Heart left ventricle (tissue), 16 donors: ENCODE measurements at regions of chr22 and their contacts with region 1.

Region 1: GRCh38 chr22:38262051-38262795 is 10.6 kb downstream of the TMEM184B start:
- DNase-seq: peak; percentile 48 to 75 (median 61)
- ATAC-seq: peak; percentile 22 to 67 (median 56)
- H3K4me3 ChIP-seq: no peak overlapping the region
- H3K27ac ChIP-seq: peak overlapping the region in 11 of 12 donors; percentile 18 to 91 (median 78)
- H3K4me1 ChIP-seq: peaks cover 24 to 95% (median 77%) of the 10 kb centered on the region in 12 donors
- H3K27me3 ChIP-seq: no peaks in the 10 kb centered on the region
- CTCF ChIP-seq: peak; percentile 50 to 77 (median 58)
- POLR2A ChIP-seq: no peak

Region 2: DNA sequence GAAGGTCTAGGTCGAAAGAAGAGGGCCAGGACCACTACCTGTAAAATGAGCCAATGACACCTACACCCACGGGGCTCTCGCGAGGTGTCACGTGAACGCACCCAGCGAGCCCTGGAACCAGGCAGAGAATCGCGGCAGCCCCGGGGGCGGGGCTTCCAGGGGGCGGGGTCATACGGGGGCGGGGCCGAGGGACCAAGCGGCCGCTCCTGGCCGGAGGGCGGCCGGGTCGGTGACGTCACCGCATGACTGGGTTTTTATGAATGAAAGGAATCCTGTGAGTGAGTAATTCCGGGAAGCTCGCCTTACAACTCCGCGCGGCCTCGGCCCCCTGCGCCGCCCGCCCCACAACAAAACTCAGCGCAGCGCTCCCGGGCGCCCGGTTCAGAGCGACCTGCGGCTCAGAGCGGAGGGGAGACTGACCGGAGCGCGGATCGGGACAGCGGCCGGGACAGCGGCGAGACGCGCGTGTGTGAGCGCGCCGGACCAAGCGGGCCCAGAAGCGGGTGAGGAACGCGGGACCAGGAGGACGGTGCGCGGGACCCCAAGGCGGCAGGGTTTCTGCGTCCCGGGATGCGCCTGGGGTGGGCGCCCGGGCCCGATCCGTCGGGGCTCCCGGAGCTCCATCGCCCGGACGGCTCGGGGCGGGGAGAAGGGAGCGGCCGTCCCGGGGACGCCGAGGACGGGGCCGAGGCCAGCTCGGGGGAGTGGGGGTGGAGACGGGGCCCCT is 60.4 kb before region 1 on chr22 and contains the start of gene MAFF:
- intact Hi-C with region 1: loop called in 1 of 10 experiments (anchors 5 kb)
- DNase-seq: peak; percentile 96 to 98 (median 97)
- ATAC-seq: peak; percentile 69 to 88 (median 86)
- H3K4me3 ChIP-seq: peak within 1 kb of the TSS; percentile 73 to 98 (median 80)
- H3K27ac ChIP-seq: peak within 1 kb of the TSS; percentile 95 to 100 (median 98)
- H3K4me1 ChIP-seq: peaks cover 6 to 37% (median 26%) of the 10 kb centered on the region in 12 donors
- H3K27me3 ChIP-seq: no peaks in the 10 kb centered on the region
- CTCF ChIP-seq: no peak
- POLR2A ChIP-seq: peak; percentile 88 to 94
- total RNA-seq, gene MAFF: 1.9 to 35.8 (median 4.0) TPM

Region 3: DNA sequence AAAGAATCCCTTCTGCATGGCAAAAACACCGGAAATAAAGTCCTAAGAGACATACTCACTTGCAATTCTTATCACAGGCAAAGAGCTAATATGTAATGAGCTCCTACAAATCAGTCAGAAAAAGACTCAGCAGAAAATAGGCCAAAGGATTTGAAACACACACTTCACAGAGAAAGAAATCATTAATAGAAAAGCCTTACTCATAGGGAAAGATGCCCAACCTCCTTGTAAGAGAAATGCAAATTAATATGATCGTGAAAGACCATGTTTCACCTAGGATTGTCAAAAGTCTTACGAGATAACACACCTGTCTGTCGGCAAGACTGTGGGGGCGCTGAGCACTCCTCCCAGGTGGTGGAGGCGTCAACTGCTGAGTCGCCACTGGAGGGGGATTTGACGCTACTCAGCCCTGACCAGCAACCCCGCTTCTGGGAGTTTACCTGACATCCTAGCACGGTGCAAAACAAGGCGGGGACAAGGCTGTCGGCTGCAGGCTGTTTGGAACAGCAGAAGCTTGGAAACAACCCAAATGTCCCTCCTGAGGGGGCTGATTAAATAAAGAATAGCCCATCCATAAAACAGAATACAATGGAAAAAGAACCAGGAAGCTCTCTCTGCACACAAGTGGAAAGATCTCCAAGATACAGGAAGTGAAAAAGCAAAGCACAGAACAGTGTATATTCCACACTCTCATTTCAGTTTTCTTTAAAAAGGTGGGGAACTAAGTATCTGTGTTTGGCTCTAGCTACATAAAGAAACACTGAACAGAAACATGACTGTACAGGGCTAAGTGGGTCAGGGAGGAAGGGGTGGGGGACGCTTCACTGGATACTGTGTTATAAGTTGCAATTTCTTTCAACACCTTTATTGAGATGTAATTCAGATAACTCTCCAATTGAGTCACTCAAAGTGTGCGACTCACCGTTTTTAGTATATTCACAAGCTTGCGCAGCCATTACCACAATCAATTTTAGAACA is 43.5 kb after region 1 on chr22:
- intact Hi-C with region 1: loop called in 2 of 10 experiments (anchors 5 kb)
- DNase-seq: peak in 1 of 5 donors; percentile 47
- ATAC-seq: peak in 2 of 4 donors; percentile 23 to 31
- H3K4me3 ChIP-seq: peak overlapping the region in 3 of 12 donors; percentile 8 to 14 (median 11)
- H3K27ac ChIP-seq: peak overlapping the region; percentile 18 to 100 (median 76)
- H3K4me1 ChIP-seq: peaks cover 18 to 83% (median 74%) of the 10 kb centered on the region in 12 donors
- H3K27me3 ChIP-seq: no peaks in the 10 kb centered on the region
- CTCF ChIP-seq: no peak
- POLR2A ChIP-seq: no peak

Region 4: DNA sequence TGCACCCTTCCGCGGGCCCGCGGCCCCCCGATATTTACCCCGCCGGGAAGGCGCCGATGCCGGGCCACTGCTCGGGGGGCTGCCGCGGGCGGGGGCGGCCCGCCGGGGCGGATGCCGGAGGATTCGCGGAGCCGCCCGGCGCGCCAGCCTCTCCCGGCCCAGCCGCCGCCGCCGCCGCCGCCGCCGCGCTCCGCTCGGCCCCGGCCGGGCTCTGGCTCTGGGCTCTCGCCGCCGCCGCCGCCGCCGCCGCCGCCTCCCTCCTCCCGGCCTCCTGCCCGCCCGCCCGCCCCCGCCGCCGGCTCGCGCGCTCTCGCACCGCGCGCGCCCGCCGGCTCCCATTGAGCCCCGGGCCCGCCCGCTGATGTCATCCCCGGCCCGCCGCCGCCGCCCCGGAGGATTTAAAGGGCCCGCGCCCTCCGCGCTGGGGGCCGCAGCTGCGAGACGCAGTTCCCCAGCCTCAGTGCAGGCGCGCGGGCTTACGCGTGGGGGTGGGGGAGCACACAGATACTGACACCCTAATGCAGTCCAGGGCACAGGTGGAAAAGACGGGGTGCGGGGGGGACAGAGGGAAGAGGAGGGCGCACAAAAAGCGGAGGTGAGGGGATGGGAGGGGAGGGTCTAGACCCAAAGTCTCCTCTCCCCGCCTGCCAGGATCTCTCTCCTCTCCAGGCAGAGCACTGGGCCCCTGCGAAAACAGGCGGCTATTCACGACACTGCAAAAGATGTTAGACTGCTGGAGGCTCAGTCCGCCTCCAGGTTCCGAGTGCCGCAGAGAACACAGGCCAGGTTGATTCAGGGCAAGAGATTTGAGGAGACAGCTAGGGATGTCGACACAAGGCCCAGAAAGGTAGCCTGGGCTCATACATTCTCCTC is 55.1 kb after region 1 on chr22 and contains the start of gene CSNK1E:
- intact Hi-C with region 1: loop called in 1 of 10 experiments (anchors 5 kb)
- DNase-seq: peak; percentile 86 to 91 (median 88)
- ATAC-seq: peak; percentile 35 to 77 (median 67)
- H3K4me3 ChIP-seq: peak within 1 kb of the TSS; percentile 52 to 98 (median 84)
- H3K27ac ChIP-seq: peak within 1 kb of the TSS; percentile 95 to 100 (median 98)
- H3K4me1 ChIP-seq: peaks cover 10 to 56% (median 44%) of the 10 kb centered on the region in 12 donors
- H3K27me3 ChIP-seq: no peaks in the 10 kb centered on the region
- CTCF ChIP-seq: no peak
- POLR2A ChIP-seq: peak in 1 of 2 donors; percentile 37
- total RNA-seq, gene CSNK1E: 59.7 to 117 (median 72.6) TPM

Region 5: GRCh38 chr22:38347897-38348750 is 85.9 kb after region 1 on chr22:
- intact Hi-C with region 1: loop called in 5 of 10 experiments (anchors 5 to 10 kb)
- DNase-seq: peak in 1 of 5 donors; percentile 48
- ATAC-seq: peak in 2 of 4 donors; percentile 16 to 17
- H3K4me3 ChIP-seq: no peak overlapping the region
- H3K27ac ChIP-seq: no peak overlapping the region
- H3K4me1 ChIP-seq: peaks cover 0 to 7% (median 1%) of the 10 kb centered on the region in 12 donors
- H3K27me3 ChIP-seq: peaks cover 0 to 18% (median 0%) of the 10 kb centered on the region in 9 donors
- CTCF ChIP-seq: no peak
- POLR2A ChIP-seq: no peak

Region 6: DNA sequence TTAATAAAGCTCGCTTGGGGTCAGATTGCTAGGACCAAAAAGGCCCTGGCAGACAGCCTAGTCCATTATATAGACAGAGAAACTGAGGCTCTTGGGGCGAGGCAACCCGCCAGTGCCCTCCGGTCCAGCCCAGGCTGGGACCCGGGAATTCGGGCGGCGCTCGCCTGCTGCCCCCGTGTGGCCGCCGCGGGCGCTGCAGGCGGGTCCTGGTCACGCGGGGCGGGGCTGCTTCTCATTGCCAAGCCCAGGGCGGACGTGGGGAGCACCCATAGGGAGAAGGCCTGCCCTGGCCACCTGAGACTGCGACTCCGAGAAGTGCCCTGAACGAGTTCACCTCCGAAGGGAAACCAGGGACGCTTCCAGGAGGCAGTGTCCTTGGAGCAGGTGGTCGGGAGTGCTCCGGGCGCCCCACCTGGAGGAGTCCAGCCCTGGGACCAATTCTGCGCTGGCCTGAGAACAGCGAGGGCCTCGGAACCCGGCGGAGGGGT is 91.0 kb after region 1 on chr22:
- intact Hi-C with region 1: loop called in 5 of 10 experiments (anchors 5 to 10 kb)
- DNase-seq: peak; percentile 63 to 88 (median 69)
- ATAC-seq: peak in 3 of 4 donors; percentile 65 to 81 (median 81)
- H3K4me3 ChIP-seq: no peak overlapping the region
- H3K27ac ChIP-seq: peak overlapping the region in 4 of 12 donors; percentile 21 to 60 (median 24)
- H3K4me1 ChIP-seq: peaks cover 0 to 11% (median 4%) of the 10 kb centered on the region in 12 donors
- H3K27me3 ChIP-seq: no peaks in the 10 kb centered on the region
- CTCF ChIP-seq: peak; percentile 97 to 100 (median 99)
- POLR2A ChIP-seq: no peak